CD8-positive, alpha-beta T cell (primary cell): ENCODE measurements at regions of chr6 and their contacts with region 1.

Region 1: GRCh38 chr6:43013843-43014433 is at the starts of genes KLHDC3 and MEA1:
- DNase-seq: peak; percentile 95 to 100 (median 98)
- ATAC-seq: peak; percentile 96
- H3K4me3 ChIP-seq: peak within 1 kb of the TSS; percentile 79 to 84
- H3K4me3 Mint-ChIP-seq: peak within 1 kb of the TSS; percentile 95
- H3K27ac ChIP-seq: peak within 1 kb of the TSS; percentile 60 to 74
- H3K27ac Mint-ChIP-seq: peak within 1 kb of the TSS; percentile 94
- H3K4me1 ChIP-seq: peaks cover 29% of the 10 kb centered on the region
- H3K4me1 Mint-ChIP-seq: peaks cover 63% of the 10 kb centered on the region
- H3K27me3 ChIP-seq: no peaks in the 10 kb centered on the region
- H3K27me3 Mint-ChIP-seq: no peaks in the 10 kb centered on the region
- CTCF ChIP-seq: no peak
- total RNA-seq, gene KLHDC3: 20.9 to 21.7 TPM
- total RNA-seq, gene MEA1: 14.5 to 15.3 TPM

Region 2: GRCh38 chr6:42217519-42218367 is 796.2 kb before region 1 on chr6 and contains the start of gene MRPS10:
- CTCF ChIA-PET with region 1: no interaction called
- POLR2A ChIA-PET with region 1: no interaction called
- intact Hi-C with region 1: loop called (anchors 2 to 5 kb)
- DNase-seq: peak; percentile 81 to 95 (median 91)
- ATAC-seq: peak; percentile 99
- H3K4me3 ChIP-seq: peak within 1 kb of the TSS; percentile 70 to 93
- H3K4me3 Mint-ChIP-seq: peak within 1 kb of the TSS; percentile 99
- H3K27ac ChIP-seq: peak within 1 kb of the TSS; percentile 63 to 74
- H3K27ac Mint-ChIP-seq: peak within 1 kb of the TSS; percentile 97
- H3K4me1 ChIP-seq: peaks cover 8% of the 10 kb centered on the region
- H3K4me1 Mint-ChIP-seq: peaks cover 25% of the 10 kb centered on the region
- H3K27me3 ChIP-seq: no peaks in the 10 kb centered on the region
- H3K27me3 Mint-ChIP-seq: no peaks in the 10 kb centered on the region
- CTCF ChIP-seq: no peak
- total RNA-seq, gene MRPS10: 17.0 to 17.4 TPM

Region 3: GRCh38 chr6:42378125-42378524 is 635.8 kb before region 1 on chr6:
- CTCF ChIA-PET with region 1: no interaction called
- POLR2A ChIA-PET with region 1: no interaction called
- intact Hi-C with region 1: no loop called
- DNase-seq: peak in 2 of 9 experiments; percentile 42 to 63
- ATAC-seq: peak; percentile 71
- H3K4me3 ChIP-seq: no peak overlapping the region
- H3K4me3 Mint-ChIP-seq: peak overlapping the region; percentile 67
- H3K27ac ChIP-seq: peak overlapping the region; percentile 17 to 68
- H3K27ac Mint-ChIP-seq: peak overlapping the region; percentile 96
- H3K4me1 ChIP-seq: peaks cover 63% of the 10 kb centered on the region
- H3K4me1 Mint-ChIP-seq: peaks cover 66% of the 10 kb centered on the region
- H3K27me3 ChIP-seq: no peaks in the 10 kb centered on the region
- H3K27me3 Mint-ChIP-seq: no peaks in the 10 kb centered on the region
- CTCF ChIP-seq: no peak

Region 4: GRCh38 chr6:42901536-42901957 is 112.4 kb before region 1 on chr6:
- CTCF ChIA-PET with region 1: interaction called, 3 read pairs
- POLR2A ChIA-PET with region 1: no interaction called
- intact Hi-C with region 1: loop called (anchors 2 to 5 kb)
- DNase-seq: peak; percentile 32 to 89 (median 67)
- ATAC-seq: peak; percentile 100
- H3K4me3 ChIP-seq: no peak overlapping the region
- H3K4me3 Mint-ChIP-seq: peak overlapping the region; percentile 63
- H3K27ac ChIP-seq: no peak overlapping the region
- H3K27ac Mint-ChIP-seq: no peak overlapping the region
- H3K4me1 ChIP-seq: peaks cover 6% of the 10 kb centered on the region
- H3K4me1 Mint-ChIP-seq: peaks cover 17% of the 10 kb centered on the region
- H3K27me3 ChIP-seq: no peaks in the 10 kb centered on the region
- H3K27me3 Mint-ChIP-seq: no peaks in the 10 kb centered on the region
- CTCF ChIP-seq: peak; percentile 92

Region 5: GRCh38 chr6:42978839-42979522 is 35.0 kb before region 1 on chr6 and contains the start of gene PEX6:
- CTCF ChIA-PET with region 1: interaction called, 3 read pairs
- POLR2A ChIA-PET with region 1: interaction called, 29 read pairs
- intact Hi-C with region 1: loop called (anchors 1 kb)
- DNase-seq: peak; percentile 77 to 98 (median 94)
- ATAC-seq: peak; percentile 89
- H3K4me3 ChIP-seq: peak within 1 kb of the TSS; percentile 49 to 71
- H3K4me3 Mint-ChIP-seq: peak within 1 kb of the TSS; percentile 90
- H3K27ac ChIP-seq: peak within 1 kb of the TSS; percentile 64 to 89
- H3K27ac Mint-ChIP-seq: peak within 1 kb of the TSS; percentile 95
- H3K4me1 ChIP-seq: peaks cover 45% of the 10 kb centered on the region
- H3K4me1 Mint-ChIP-seq: peaks cover 55% of the 10 kb centered on the region
- H3K27me3 ChIP-seq: no peaks in the 10 kb centered on the region
- H3K27me3 Mint-ChIP-seq: no peaks in the 10 kb centered on the region
- CTCF ChIP-seq: no peak
- total RNA-seq, gene PEX6: 6.7 to 6.8 TPM

Region 6: GRCh38 chr6:42984001-42984923 is 29.7 kb before region 1 on chr6 and contains the start of gene PPP2R5D:
- CTCF ChIA-PET with region 1: interaction called, 6 read pairs
- POLR2A ChIA-PET with region 1: interaction called, 29 read pairs
- intact Hi-C with region 1: loop called (anchors 1 kb)
- DNase-seq: peak; percentile 93 to 99 (median 96)
- ATAC-seq: peak; percentile 93
- H3K4me3 ChIP-seq: peak within 1 kb of the TSS; percentile 81 to 86
- H3K4me3 Mint-ChIP-seq: peak within 1 kb of the TSS; percentile 94
- H3K27ac ChIP-seq: peak within 1 kb of the TSS; percentile 78 to 86
- H3K27ac Mint-ChIP-seq: peak within 1 kb of the TSS; percentile 95
- H3K4me1 ChIP-seq: peaks cover 44% of the 10 kb centered on the region
- H3K4me1 Mint-ChIP-seq: peaks cover 62% of the 10 kb centered on the region
- H3K27me3 ChIP-seq: no peaks in the 10 kb centered on the region
- H3K27me3 Mint-ChIP-seq: no peaks in the 10 kb centered on the region
- CTCF ChIP-seq: no peak
- total RNA-seq, gene PPP2R5D: 14.1 to 19.5 TPM

Region 7: GRCh38 chr6:43053545-43054205 is 39.7 kb after region 1 on chr6 and contains the start of gene CUL7:
- CTCF ChIA-PET with region 1: interaction called, 3 read pairs
- POLR2A ChIA-PET with region 1: interaction called, 14 read pairs
- intact Hi-C with region 1: loop called (anchors 1 kb)
- DNase-seq: peak; percentile 71 to 94 (median 91)
- ATAC-seq: peak; percentile 99
- H3K4me3 ChIP-seq: peak within 1 kb of the TSS; percentile 81 to 83
- H3K4me3 Mint-ChIP-seq: peak within 1 kb of the TSS; percentile 92
- H3K27ac ChIP-seq: peak within 1 kb of the TSS; percentile 79 to 89
- H3K27ac Mint-ChIP-seq: peak within 1 kb of the TSS; percentile 97
- H3K4me1 ChIP-seq: peaks cover 25% of the 10 kb centered on the region
- H3K4me1 Mint-ChIP-seq: peaks cover 48% of the 10 kb centered on the region
- H3K27me3 ChIP-seq: no peaks in the 10 kb centered on the region
- H3K27me3 Mint-ChIP-seq: no peaks in the 10 kb centered on the region
- CTCF ChIP-seq: no peak
- total RNA-seq, gene CUL7: 5.2 to 5.4 TPM

Region 8: DNA sequence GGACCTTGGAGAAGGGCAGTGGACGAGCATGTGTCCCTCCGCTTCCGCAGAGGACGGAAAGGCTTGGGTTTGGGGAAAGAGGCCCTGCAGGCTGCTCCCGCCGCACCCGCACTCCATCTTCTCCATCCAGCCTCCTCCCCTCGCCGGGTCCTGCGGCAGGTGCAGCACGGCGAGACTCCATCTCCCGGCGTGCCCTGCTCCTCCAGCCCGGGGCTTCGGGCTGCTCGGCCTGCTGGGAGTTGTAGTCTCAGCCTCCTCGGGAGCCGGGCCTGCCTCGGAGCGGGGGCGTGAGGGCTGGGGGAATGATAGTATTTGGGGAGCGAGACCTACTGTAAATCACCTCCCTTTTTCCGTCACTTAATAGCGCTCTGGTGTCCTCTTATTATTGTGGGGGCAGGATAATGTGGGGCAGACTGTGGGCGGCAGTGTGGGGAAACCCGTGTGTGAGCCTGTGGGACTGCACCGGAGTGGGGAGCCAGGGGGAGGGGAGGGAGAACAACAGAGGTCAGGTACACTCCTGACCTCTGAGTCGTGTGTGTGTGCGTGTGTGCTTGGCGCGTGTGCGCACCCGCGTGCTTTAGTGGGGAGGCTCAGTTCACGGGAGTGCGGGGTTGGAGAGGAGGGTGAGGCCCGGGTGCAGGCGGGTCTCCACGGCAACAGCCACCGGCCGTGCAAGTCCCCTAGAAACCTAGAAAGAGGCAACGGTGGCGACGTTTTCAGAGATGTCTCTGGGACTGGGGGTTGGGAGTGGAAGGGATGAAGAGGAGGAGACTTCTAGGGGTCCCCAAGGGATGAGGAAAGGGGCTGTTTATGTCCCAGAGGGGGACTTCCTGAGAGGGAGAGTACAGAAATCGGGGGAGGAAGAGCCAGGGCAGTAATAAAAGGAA is 233.4 kb after region 1 on chr6:
- CTCF ChIA-PET with region 1: no interaction called
- POLR2A ChIA-PET with region 1: no interaction called
- intact Hi-C with region 1: loop called in 1 of 2 experiments (anchors 5 kb)
- DNase-seq: peak; percentile 59 to 87 (median 78)
- ATAC-seq: peak; percentile 95
- H3K4me3 ChIP-seq: peak overlapping the region; percentile 65 to 71
- H3K4me3 Mint-ChIP-seq: no peak overlapping the region
- H3K27ac ChIP-seq: peak overlapping the region; percentile 19 to 40
- H3K27ac Mint-ChIP-seq: peak overlapping the region; percentile 88
- H3K4me1 ChIP-seq: peaks cover 11% of the 10 kb centered on the region
- H3K4me1 Mint-ChIP-seq: peaks cover 15% of the 10 kb centered on the region
- H3K27me3 ChIP-seq: peaks cover 11 to 22% of the 10 kb centered on the region in 2 experiments
- H3K27me3 Mint-ChIP-seq: peaks cover 16% of the 10 kb centered on the region
- CTCF ChIP-seq: no peak

Region 9: GRCh38 chr6:43339168-43339567 is 325.2 kb after region 1 on chr6:
- CTCF ChIA-PET with region 1: no interaction called
- POLR2A ChIA-PET with region 1: no interaction called
- intact Hi-C with region 1: no loop called
- DNase-seq: no peak
- ATAC-seq: no peak
- H3K4me3 ChIP-seq: no peak overlapping the region
- H3K4me3 Mint-ChIP-seq: no peak overlapping the region
- H3K27ac ChIP-seq: no peak overlapping the region
- H3K27ac Mint-ChIP-seq: no peak overlapping the region
- H3K4me1 ChIP-seq: no peaks in the 10 kb centered on the region
- H3K4me1 Mint-ChIP-seq: peaks cover 3% of the 10 kb centered on the region
- H3K27me3 ChIP-seq: no peaks in the 10 kb centered on the region
- H3K27me3 Mint-ChIP-seq: no peaks in the 10 kb centered on the region
- CTCF ChIP-seq: no peak